ENCODE measurements at regions of chr1 and their contacts with region 1.

Region 1: GRCh38 chr1:40032240-40032891 is 8.2 kb upstream of the CAP1 start:
- DNase-seq: no peak
- H3K4me3 ChIP-seq: no peak overlapping the region
- CTCF ChIP-seq: peak; percentile 70

Region 2: GRCh38 chr1:39816415-39817090 is 215.8 kb before region 1 on chr1:
- CTCF ChIA-PET with region 1: interaction called, 72 read pairs
- POLR2A ChIA-PET with region 1: no interaction called
- DNase-seq: peak; percentile 49
- H3K4me3 ChIP-seq: no peak overlapping the region
- CTCF ChIP-seq: peak; percentile 81

Region 3: DNA sequence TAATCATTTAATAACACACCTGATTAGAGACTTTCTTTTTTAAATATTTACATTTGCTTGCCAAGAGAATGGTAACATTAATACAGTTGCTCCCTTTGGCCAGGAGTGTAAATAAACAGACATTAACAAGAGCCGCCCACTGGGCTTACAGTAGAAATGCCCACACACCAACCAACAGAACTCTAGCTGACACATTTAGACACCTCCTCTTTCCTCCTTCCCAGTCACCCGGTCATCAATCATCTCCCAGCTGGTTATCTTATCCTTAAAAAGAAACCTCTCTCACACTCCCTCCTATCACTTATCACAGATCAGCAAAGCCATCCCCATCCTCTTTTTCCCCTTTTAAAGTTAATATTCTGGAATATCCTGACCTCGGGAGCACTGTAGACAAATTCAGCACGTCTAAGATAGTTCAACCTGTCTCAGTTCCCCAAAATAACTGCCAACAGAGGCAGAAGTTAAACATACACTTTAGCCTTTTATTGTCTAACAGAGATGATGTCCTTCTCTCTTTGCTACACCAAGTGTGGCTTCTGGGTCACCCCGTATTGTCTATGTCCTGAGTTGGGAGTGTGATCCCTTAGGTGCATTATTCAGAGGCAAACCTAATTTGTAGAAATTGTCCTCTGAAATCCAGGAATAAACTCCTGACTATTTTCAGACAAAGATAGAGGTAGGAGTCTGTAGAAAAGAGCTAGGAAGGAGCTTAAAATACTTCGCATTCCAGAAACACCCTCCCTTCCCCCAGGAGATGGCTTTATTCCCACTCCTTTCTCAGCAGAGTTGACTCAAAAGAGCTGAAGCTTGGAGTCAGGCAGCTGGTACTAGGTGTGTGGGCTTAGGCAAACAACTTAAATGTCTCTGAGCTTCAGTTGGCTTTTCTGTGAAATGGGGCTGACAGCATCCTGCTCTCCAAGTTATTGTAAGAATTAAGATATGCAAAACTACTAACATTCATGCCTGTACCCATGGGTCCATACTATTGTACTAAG is 139.5 kb before region 1 on chr1:
- CTCF ChIA-PET with region 1: interaction called, 20 read pairs
- POLR2A ChIA-PET with region 1: no interaction called
- DNase-seq: peak; percentile 45
- H3K4me3 ChIP-seq: no peak overlapping the region
- CTCF ChIP-seq: no peak

Region 4: GRCh38 chr1:39919545-39919944 is 112.8 kb before region 1 on chr1:
- CTCF ChIA-PET with region 1: interaction called, 185 read pairs
- POLR2A ChIA-PET with region 1: no interaction called
- DNase-seq: no peak
- H3K4me3 ChIP-seq: no peak overlapping the region
- CTCF ChIP-seq: peak; percentile 48

Region 5: GRCh38 chr1:39981957-39982356 is 50.4 kb before region 1 on chr1:
- CTCF ChIA-PET with region 1: interaction called, 16 read pairs
- POLR2A ChIA-PET with region 1: no interaction called
- DNase-seq: peak; percentile 67
- H3K4me3 ChIP-seq: no peak overlapping the region
- CTCF ChIP-seq: no peak

Region 6: GRCh38 chr1:40020447-40021085 is 11.8 kb before region 1 on chr1:
- CTCF ChIA-PET with region 1: interaction called, 81 read pairs
- POLR2A ChIA-PET with region 1: interaction called, 4 read pairs
- DNase-seq: no peak
- H3K4me3 ChIP-seq: no peak overlapping the region
- CTCF ChIP-seq: no peak

Region 7: DNA sequence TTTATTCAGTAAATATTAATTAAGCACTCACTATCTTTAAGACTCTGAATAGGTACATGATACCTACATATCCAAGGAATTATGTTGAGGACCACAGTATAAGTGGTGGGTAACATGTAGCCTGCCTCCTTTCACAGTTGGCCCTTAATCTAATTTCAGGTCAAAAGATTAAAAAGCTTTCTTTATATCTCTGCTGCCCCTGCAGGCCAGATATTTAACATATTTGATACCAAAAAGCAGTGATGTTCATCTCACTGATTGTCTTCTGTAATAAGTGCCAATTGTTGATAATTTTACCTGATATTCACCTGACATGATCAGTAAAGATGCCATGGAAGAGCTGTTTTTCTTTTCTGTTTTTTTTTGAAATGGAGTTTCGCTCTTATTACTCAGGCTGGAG is 165.3 kb after region 1 on chr1:
- CTCF ChIA-PET with region 1: no interaction called
- POLR2A ChIA-PET with region 1: no interaction called
- DNase-seq: no peak
- H3K4me3 ChIP-seq: no peak overlapping the region
- CTCF ChIP-seq: no peak

Measured in AG04449 (cell line).